ENCODE measurements at regions of chr11 and their contacts with region 1.

Region 1: GRCh38 chr11:115153135-115153534 is 351.1 kb downstream of the CADM1 start:
- DNase-seq: no peak
- ATAC-seq: no peak
- H3K4me3 ChIP-seq: no peak overlapping the region
- H3K27ac ChIP-seq: no peak overlapping the region
- H3K4me1 ChIP-seq: no peaks in the 10 kb centered on the region
- H3K27me3 ChIP-seq: no peaks in the 10 kb centered on the region
- CTCF ChIP-seq: no peak
- POLR2A ChIP-seq: no peak

Region 2: GRCh38 chr11:114892381-114893197 is 260.5 kb before region 1 on chr11:
- intact Hi-C with region 1: loop called in 1 of 2 experiments (anchors 10 kb)
- DNase-seq: no peak
- ATAC-seq: no peak
- H3K4me3 ChIP-seq: no peak overlapping the region
- H3K27ac ChIP-seq: no peak overlapping the region
- H3K4me1 ChIP-seq: no peaks in the 10 kb centered on the region
- H3K27me3 ChIP-seq: no peaks in the 10 kb centered on the region
- CTCF ChIP-seq: peak in 1 of 4 donors; percentile 31
- POLR2A ChIP-seq: no peak

Region 3: GRCh38 chr11:115263799-115264656 is 110.9 kb after region 1 on chr11:
- intact Hi-C with region 1: no loop called
- DNase-seq: no peak
- ATAC-seq: no peak
- H3K4me3 ChIP-seq: no peak overlapping the region
- H3K27ac ChIP-seq: no peak overlapping the region
- H3K4me1 ChIP-seq: no peaks in the 10 kb centered on the region
- H3K27me3 ChIP-seq: no peaks in the 10 kb centered on the region
- CTCF ChIP-seq: no peak
- POLR2A ChIP-seq: no peak

Measured in right lobe of liver (tissue), 6 donors.